BJ (cell line): ENCODE measurements at regions of chr12 and their contacts with region 1.

Region 1: DNA sequence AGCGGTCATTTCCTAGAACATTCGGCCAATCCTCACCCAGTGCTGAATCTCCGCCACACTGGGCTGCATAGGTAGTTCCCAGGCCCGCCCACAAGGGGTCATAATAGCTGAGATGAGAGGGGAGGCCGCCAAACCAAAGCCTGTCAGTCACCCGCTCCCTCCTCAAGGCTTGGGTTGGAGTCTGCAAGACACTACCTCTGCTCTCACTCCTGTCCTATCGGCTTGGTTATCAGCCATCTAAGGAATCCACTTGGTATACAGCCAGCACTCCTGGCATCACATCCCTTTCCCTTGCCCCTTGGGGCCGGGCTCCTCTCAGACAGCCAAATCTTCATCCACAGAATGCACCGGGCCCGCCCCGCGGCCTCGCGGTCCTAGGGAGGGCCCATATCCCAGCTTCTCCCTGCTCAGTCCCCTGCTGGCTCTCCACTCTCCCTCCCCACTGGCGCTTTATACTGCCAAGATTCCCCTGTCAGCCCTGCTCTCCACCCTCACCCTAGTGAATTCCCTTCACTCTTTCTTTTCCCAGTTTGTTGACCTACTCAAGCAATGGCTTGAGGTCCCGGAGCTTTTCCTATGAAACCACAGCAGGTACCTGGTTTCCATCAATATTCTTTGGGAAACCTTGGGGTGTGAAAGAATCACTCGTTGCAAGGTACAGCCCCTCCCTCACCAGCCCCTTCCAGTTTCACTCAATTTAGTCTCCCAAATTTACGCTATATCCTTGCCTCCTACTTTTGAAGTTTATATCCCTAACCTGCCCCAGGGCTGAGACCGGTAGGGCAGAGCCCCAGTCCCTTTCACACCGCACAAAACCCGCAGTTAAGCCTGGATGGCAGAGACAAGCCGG is 1.4 kb downstream of the IFFO1 start:
- DNase-seq: no peak
- H3K4me3 ChIP-seq: peak overlapping the region; percentile 68
- H3K27me3 ChIP-seq: no peaks in the 10 kb centered on the region
- CTCF ChIP-seq: peak; percentile 68

Region 2: DNA sequence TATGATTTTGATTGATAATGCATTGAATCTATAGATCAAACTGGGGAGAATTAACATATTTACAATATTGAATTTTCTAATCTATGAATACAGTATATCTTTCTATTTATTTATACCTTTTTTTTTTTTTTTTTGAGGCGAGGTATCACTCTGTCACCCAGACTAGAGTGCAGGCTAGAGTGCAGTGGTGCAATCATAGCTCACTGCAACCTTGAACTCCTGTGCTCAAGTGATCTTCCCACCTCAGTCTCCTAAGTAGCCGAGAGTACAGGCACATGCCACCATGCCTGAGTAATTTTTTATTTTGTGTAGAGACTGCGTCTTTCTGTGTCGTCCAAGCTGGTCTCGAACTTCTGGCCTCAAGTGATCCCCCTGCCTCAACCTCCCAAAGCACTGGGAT is 150.0 kb before region 1 on chr12:
- CTCF ChIA-PET with region 1: no interaction called
- POLR2A ChIA-PET with region 1: interaction called, 11 read pairs
- DNase-seq: no peak
- H3K4me3 ChIP-seq: no peak overlapping the region
- H3K27me3 ChIP-seq: no peaks in the 10 kb centered on the region
- CTCF ChIP-seq: no peak

Region 3: DNA sequence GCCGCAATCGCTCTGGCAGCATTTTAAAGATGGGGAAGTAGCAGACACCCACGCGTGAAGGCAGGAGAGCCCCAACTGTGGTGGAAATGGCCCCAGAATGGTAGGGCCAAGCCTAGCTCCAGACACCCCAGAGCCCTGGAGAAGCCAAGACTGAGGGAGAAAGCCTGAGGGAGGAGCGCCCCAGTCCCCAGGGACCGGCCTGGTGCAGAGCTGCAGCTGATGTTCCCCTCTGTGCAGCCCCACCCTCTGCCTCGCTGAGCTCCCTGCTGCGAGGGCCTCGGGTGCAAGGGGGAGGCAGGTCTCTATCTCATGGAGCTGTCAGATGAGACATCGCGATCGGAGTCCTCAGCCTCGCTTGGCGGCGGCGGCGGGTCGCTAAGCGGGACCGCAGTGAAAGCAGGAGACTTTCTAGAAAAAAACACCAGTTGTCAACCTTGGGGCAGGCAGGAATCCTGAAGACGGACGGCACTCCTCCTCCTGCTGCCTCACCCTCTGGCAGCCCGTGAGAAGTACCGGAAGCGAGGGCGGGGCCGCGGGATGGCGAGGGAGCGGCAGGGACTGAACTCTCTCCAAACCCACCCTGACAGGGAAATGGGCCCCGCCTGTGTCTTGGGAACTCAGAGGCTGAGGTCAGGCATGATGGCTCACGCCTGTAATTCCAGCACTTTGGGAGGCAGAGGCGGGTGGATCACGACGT is 14.1 kb before region 1 on chr12:
- CTCF ChIA-PET with region 1: interaction called, 157 read pairs
- POLR2A ChIA-PET with region 1: interaction called, 16 read pairs
- DNase-seq: peak; percentile 87
- H3K4me3 ChIP-seq: peak overlapping the region; percentile 5; the same call in 1 of the 2 replicates
- H3K27me3 ChIP-seq: no peaks in the 10 kb centered on the region
- CTCF ChIP-seq: no peak

Region 4: DNA sequence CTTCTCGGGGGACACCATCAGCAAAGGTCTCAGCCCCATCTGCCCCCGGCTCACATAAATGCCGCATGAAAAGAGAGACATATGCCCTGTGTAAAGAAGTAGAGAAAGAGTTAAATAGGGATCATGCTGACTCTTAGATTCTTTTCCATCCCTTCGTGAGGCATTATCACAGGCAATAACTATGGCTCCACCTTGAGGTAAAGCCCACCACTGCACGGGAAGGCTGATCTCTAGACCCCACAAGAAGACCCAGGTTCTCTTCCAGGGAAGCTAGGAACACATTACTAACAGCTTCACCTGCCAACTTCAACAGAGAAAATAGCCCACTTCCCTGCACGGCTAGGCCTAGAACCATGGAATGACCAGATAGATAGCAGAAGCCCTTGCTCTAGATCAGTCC is 27.8 kb after region 1 on chr12:
- CTCF ChIA-PET with region 1: no interaction called
- POLR2A ChIA-PET with region 1: interaction called, 24 read pairs
- DNase-seq: no peak
- H3K4me3 ChIP-seq: no peak overlapping the region
- H3K27me3 ChIP-seq: no peaks in the 10 kb centered on the region
- CTCF ChIP-seq: peak; percentile 26; the same call in 1 of the 2 replicates

Region 5: DNA sequence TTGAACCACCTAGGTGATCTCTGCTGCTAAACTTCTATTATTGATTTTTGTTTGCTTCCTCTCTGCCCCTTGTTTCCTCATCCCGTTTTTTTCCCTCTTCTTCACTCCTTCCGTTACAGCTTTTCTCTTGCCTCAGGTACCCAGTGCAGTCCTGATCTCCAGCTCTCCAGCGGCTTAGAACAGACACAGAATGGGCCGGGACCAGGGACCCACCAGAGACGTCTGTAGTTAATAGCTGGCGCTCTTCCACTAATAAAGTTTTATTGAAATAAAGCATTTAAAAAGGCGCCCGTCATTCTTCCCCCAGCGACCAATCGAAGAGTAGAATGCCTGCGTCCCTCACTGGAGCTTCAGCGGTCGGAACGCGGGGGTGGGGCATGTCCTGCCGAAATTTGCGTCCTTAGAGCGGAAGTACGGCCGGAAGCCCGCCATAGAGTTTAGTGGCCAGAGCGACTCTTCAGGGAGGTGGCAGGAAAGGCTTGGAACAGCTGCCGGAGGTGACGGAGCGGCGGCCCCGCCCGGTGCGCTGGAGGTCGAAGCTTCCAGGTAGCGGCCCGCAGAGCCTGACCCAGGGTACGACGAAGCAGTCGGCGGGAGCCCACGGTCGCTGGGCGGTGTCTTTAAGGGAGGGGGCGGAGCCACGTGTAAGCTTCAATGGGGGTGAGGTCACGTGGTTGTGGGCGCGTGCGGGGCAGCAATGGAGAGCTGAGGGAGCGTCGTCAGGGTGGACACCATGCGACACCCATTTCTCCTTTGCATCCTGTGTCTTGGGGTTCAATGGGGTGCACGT is 169.4 kb after region 1 on chr12 and contains the start of gene COPS7A:
- CTCF ChIA-PET with region 1: no interaction called
- POLR2A ChIA-PET with region 1: interaction called, 19 read pairs
- DNase-seq: peak; percentile 93
- H3K4me3 ChIP-seq: peak within 1 kb of the TSS; percentile 52
- H3K27me3 ChIP-seq: no peaks in the 10 kb centered on the region
- CTCF ChIP-seq: no peak
- polyA plus RNA-seq, gene COPS7A: 128 and 200 TPM in 2 replicates